ENCODE measurements at regions of chr12 and their contacts with region 1.

Region 1: DNA sequence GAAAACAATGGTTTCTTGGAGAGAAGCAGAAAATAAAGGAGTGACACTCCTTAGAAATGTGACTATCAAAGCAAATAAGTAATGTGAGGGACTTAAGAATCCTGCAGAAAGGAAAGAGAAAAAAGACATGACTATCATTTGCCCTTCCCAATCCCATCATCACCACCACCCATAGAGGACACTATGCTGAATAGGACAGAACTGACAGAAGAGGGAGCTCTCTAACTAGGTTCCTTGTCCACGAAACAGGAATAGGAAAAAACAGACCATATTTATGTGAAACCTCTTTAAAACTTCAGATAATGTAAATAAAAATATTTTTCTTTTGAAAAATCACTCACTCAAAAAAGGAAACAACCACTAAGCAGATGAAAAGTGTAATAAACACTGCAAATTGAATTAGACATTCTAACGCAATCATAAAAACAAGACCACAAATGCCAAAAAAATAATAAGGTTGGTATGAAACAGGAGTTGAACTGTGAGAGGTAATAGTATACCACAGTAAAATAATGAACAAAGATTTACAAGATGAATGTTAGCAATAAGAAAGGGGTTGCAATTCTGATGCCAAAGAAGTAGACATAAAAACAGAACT is 24.1 kb downstream of the KLRD1 start:
- DNase-seq: peak in 3 of 14 experiments; percentile 53 to 59 (median 56)
- ATAC-seq: peak; percentile 44
- H3K4me3 ChIP-seq: no peak overlapping the region
- H3K4me3 Mint-ChIP-seq: no peak overlapping the region
- H3K27ac ChIP-seq: no peak overlapping the region
- H3K27ac Mint-ChIP-seq: no peak overlapping the region
- H3K4me1 ChIP-seq: no peaks in the 10 kb centered on the region
- H3K4me1 Mint-ChIP-seq: no peaks in the 10 kb centered on the region
- H3K27me3 ChIP-seq: no peaks in the 10 kb centered on the region
- H3K27me3 Mint-ChIP-seq: no peaks in the 10 kb centered on the region
- CTCF ChIP-seq: peak; percentile 63

Region 2: DNA sequence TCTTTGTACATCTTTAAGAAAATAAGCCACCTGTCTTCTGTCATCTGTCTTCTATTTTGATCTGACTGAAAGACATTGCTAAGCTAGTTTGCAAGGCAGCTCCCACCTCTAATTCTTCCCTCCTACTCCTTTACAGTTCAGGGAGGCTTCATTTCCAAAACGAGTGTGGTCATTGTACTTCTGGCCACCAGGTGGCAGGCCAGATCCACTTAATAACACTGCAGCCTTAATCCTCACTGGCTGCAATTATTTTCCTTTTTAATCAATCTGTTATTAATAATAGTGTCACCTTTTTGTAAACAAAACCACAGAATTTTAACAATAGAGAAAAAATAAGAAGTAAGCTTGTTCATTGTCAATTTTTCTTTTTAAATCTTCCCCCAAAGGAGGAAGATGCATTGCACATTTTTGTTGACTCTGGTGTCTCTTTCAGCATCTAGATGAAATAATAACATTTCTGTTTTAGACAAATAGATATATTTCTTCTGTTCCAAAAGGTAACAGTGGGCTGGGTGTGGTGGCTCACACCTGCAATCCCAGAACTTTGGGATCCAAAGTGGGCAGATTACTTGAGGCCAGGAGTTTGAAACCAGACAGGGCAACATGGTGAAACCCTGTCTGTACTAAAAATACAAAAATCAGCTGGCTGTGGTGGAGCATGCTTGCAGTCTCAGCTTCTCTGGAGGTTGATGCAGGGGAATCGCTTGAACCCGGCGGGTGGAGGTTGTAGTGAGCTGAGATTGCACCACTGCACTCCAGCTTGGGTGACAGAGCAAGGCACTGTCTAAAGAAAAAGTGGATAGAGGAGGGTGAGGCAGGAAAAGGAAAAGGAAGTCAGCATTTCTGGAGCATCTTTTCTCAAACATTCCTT is 95.7 kb before region 1 on chr12:
- CTCF ChIA-PET with region 1: no interaction called
- POLR2A ChIA-PET with region 1: no interaction called
- intact Hi-C with region 1: loop called in 1 of 2 experiments (anchors 5 kb)
- DNase-seq: peak in 13 of 14 experiments; percentile 7 to 77 (median 33)
- ATAC-seq: peak; percentile 77
- H3K4me3 ChIP-seq: no peak overlapping the region
- H3K4me3 Mint-ChIP-seq: no peak overlapping the region
- H3K27ac ChIP-seq: no peak overlapping the region
- H3K27ac Mint-ChIP-seq: no peak overlapping the region
- H3K4me1 ChIP-seq: no peaks in the 10 kb centered on the region
- H3K4me1 Mint-ChIP-seq: no peaks in the 10 kb centered on the region
- H3K27me3 ChIP-seq: no peaks in the 10 kb centered on the region
- H3K27me3 Mint-ChIP-seq: no peaks in the 10 kb centered on the region
- CTCF ChIP-seq: peak; percentile 92

Region 3: DNA sequence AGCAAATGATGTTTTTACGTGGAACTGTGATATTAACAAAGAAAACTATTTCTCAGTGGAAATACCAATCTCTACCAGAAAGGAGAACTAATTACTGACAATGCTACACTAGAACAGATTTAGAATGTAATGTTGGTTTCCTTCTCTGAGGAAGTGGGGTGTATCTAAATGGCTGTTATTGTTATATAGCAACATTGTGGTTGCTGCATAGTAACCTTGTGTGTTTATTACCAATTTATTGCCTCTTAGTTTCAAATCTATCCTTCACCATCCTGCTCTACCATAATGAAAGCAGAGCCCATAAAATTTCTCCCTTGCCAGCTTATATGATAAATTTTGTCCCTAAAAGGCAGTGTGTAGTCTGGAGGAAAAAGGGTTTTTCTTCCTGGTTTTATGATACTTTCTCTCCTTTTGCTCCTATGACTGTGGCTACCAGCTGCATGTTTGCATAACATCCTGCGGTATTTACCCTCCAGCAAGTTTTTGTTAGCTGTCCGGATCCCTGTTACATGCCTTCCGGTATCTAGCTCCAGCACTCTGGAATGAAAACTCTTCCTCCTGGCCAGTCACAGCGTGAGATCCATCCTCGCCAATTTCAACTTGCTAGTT is 63.8 kb after region 1 on chr12:
- CTCF ChIA-PET with region 1: no interaction called
- POLR2A ChIA-PET with region 1: no interaction called
- intact Hi-C with region 1: loop called in 1 of 2 experiments (anchors 10 kb)
- DNase-seq: peak in 3 of 14 experiments; percentile 16 to 76 (median 16)
- ATAC-seq: peak; percentile 51
- H3K4me3 ChIP-seq: no peak overlapping the region
- H3K4me3 Mint-ChIP-seq: no peak overlapping the region
- H3K27ac ChIP-seq: peak overlapping the region; percentile 19 to 36
- H3K27ac Mint-ChIP-seq: no peak overlapping the region
- H3K4me1 ChIP-seq: no peaks in the 10 kb centered on the region
- H3K4me1 Mint-ChIP-seq: peaks cover 7% of the 10 kb centered on the region
- H3K27me3 ChIP-seq: peaks cover 0 to 6% of the 10 kb centered on the region in 2 experiments
- H3K27me3 Mint-ChIP-seq: peaks cover 23% of the 10 kb centered on the region
- CTCF ChIP-seq: no peak

Measured in CD4-positive, alpha-beta T cell (primary cell).